ENCODE measurements at regions of chr1 and their contacts with region 1.

Region 1: GRCh38 chr1:201845331-201846083 is 16.6 kb downstream of the IPO9 start:
- DNase-seq: no peak
- CTCF ChIP-seq: no peak

Region 2: DNA sequence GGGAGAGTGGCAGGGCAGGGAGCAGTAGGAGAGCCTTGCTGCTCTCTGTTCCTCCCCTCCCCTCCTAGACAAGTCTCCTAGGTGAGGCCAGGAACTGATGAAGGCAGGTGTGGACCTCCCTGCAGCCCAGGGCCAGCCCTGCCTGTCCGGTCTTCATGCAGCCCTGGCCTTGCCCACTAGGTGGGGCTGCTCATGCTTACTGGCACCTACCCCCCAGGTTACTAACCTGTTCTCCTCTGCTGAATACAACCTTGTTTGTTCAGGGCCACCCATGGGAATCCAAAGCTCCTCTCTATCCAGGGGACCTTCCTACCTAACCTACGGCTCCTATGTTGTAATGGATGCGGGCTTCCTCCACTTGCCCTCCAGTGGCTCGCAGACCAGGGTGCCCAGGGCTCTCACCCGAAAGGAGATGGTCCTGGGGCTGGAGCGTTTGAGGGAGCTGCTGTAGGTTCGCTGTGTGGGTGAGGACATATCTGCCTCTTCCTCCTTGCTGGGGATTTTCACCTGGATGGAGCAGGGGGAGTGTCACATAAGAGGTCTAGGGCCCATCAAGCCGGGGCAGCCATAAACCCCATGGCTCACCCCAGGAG is 460.1 kb before region 1 on chr1:
- CTCF ChIA-PET with region 1: no interaction called
- POLR2A ChIA-PET with region 1: no interaction called
- DNase-seq: peak; percentile 85
- CTCF ChIP-seq: peak; percentile 87

Region 3: GRCh38 chr1:201828820-201829774 is 16.4 kb before region 1 on chr1 and contains the start of gene IPO9:
- CTCF ChIA-PET with region 1: interaction called, 25 read pairs
- POLR2A ChIA-PET with region 1: interaction called, 6 read pairs
- DNase-seq: peak; percentile 99
- CTCF ChIP-seq: peak; percentile 83

Measured in GM10248 (cell line).